CD4-positive, alpha-beta memory T cell (primary cell): ENCODE measurements at regions of chr17 and their contacts with region 1.

Region 1: DNA sequence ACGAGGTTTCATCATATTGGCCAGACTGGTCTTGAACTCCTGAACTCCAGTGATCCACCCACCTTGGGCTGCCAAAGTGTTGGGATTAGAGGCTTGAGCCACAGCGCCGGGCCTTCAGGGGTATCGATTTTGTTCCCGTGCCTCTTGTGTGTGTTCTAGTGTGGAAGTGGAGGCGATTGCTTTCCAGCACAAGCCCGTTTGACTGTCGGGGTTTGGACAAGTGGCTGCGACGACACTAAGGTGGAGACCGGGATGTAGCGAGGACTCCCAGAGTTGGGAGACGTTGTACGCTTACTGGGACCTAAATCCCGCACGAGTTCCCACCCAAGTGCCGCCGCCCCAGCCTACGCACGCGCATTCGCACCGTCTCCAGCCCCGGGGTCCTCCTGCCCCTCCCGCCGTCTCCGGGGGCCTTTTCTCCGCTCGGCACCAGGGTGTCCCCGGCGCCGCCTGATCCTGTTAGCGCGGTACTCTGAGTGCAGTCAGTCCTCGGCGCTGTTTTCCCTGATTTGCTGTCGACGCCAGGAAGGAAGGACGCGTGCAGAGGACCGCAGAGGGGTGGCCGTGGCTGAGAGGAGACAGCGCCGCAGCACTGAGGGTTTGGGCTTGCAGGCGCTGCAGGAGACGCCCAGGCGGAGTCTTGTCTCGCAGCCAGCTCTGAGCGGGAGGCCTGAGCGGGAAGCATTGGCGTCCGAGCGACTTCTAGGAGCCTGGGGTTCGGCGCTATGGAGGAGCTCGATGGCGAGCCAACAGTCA is at the start of gene NUP85:
- DNase-seq: peak; percentile 88 to 95 (median 93)
- H3K4me3 ChIP-seq: peak within 1 kb of the TSS; percentile 55 to 86
- H3K4me3 Mint-ChIP-seq: peak within 1 kb of the TSS; percentile 93 to 99 (median 96)
- H3K27ac ChIP-seq: peak within 1 kb of the TSS; percentile 80
- H3K27ac Mint-ChIP-seq: peak within 1 kb of the TSS; percentile 99 to 100 (median 99)
- H3K4me1 ChIP-seq: peaks cover 26% of the 10 kb centered on the region
- H3K4me1 Mint-ChIP-seq: peaks cover 15 to 48% (median 24%) of the 10 kb centered on the region in 4 donors
- H3K27me3 ChIP-seq: no peaks in the 10 kb centered on the region
- H3K27me3 Mint-ChIP-seq: no peaks in the 10 kb centered on the region
- total RNA-seq, gene NUP85: 137 to 164 TPM

Region 2: GRCh38 chr17:74892974-74893911 is 312.0 kb before region 1 on chr17 and contains the start of gene FADS6:
- CTCF ChIA-PET with region 1: no interaction called
- POLR2A ChIA-PET with region 1: no interaction called
- intact Hi-C with region 1: no loop called
- DNase-seq: peak in 2 of 5 donors; percentile 6 to 10
- H3K4me3 ChIP-seq: peak within 1 kb of the TSS in 1 of 2 donors; percentile 19
- H3K4me3 Mint-ChIP-seq: peak within 1 kb of the TSS; percentile 58 to 84 (median 75)
- H3K27ac ChIP-seq: no peak within 1 kb of the TSS
- H3K27ac Mint-ChIP-seq: peak within 1 kb of the TSS in 1 of 7 donors; percentile 42
- H3K4me1 ChIP-seq: no peaks in the 10 kb centered on the region
- H3K4me1 Mint-ChIP-seq: peaks cover 2 to 5% (median 3%) of the 10 kb centered on the region in 4 donors
- H3K27me3 ChIP-seq: peaks cover 9% of the 10 kb centered on the region
- H3K27me3 Mint-ChIP-seq: peaks cover 29 to 35% of the 10 kb centered on the region in 2 donors
- total RNA-seq, gene FADS6: not detected

Region 3: DNA sequence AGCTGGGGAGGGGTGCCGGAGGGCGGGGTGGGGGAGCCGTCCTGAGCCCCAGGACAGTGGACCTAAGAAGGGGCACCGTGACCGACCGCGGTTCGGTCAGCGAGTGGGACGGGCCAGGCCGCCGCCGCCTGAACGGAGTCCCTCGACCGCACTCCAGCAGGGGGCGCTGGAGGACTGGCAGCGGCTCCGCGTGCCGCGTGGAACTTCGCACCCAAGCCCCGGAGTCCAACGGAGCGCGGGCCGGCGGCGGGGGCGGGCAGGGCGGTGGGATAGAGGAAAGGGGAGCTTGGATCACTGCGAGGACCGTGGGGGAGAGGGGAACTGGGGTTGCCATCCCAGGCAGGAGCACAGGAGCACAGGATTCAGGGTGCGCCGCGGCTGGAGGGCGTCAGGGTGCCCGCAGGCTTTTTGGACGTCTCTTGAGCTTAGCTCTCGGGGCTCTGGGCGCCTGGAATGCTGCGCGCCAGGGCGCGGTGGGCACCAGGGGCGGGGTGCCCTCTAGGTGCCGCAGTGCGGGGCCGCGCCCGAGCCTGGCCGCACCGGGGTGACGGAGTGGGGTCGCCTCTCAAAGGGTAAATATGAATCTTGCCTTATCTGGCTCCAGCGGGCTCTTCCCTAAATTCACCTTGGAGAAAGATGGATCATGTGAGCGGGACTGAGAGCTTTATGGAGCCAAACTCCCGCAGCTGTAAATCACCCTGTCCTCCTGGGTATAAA is 281.5 kb before region 1 on chr17:
- CTCF ChIA-PET with region 1: interaction called, 3 read pairs
- POLR2A ChIA-PET with region 1: no interaction called
- intact Hi-C with region 1: loop called (anchors 1 kb)
- DNase-seq: peak; percentile 57 to 76 (median 68)
- H3K4me3 ChIP-seq: peak overlapping the region in 1 of 2 donors; percentile 14
- H3K4me3 Mint-ChIP-seq: peak overlapping the region in 6 of 8 donors; percentile 13 to 54 (median 44)
- H3K27ac ChIP-seq: no peak overlapping the region
- H3K27ac Mint-ChIP-seq: no peak overlapping the region
- H3K4me1 ChIP-seq: peaks cover 18% of the 10 kb centered on the region
- H3K4me1 Mint-ChIP-seq: peaks cover 1 to 17% (median 11%) of the 10 kb centered on the region in 4 donors
- H3K27me3 ChIP-seq: peaks cover 32% of the 10 kb centered on the region
- H3K27me3 Mint-ChIP-seq: peaks cover 40 to 46% of the 10 kb centered on the region in 2 donors

Region 4: DNA sequence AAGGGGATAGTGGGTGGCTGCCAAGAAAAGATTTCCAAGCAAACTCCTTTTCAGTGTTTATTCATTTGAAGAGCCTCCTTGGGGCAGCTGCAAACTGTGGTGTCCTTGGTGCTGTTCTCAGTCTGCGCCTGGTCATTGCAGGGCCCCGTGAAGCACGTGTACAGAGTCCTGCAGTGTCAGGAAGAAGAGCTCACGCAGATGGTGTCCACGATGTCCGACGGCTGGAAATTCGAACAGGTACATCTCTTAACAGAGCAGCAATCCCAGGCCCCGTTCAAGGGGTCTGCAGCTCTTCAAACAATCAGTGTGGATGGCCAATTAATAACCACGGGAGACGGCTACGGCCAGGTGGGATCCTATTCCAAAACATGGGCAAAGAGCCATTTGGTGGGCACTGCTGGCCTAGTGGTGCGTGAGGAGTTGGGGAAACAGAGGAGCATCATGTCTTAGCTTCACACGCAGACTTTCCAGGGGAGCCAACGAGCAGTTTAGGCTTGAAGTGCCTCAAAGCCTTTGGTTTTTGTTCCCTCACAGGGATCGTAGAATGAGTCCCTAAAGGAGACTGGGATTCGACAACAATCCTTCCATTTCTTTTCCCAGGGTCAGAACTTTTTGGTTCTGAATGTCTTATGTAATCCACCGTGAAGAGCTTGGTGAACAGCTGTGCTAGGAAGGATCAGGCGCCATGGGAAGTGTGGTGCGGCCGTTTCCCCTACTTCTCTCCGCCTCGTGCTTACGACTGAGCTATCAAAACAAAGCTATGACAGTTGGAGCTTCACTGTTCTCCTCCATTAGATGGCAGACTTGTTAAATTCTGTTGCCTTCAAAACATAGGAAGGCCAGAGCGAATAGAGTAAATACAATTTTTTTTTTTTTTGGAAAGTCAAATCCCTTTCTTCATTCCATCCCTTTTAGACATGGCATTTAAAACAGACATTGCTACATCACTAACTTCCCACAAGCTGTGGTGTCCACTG is 145.6 kb before region 1 on chr17:
- CTCF ChIA-PET with region 1: interaction called, 11 read pairs
- POLR2A ChIA-PET with region 1: no interaction called
- intact Hi-C with region 1: no loop called
- DNase-seq: peak in 2 of 5 donors; percentile 20 to 26
- H3K4me3 ChIP-seq: no peak overlapping the region
- H3K4me3 Mint-ChIP-seq: no peak overlapping the region
- H3K27ac ChIP-seq: no peak overlapping the region
- H3K27ac Mint-ChIP-seq: peak overlapping the region in 2 of 7 donors; percentile 61 to 78
- H3K4me1 ChIP-seq: no peaks in the 10 kb centered on the region
- H3K4me1 Mint-ChIP-seq: peaks cover 0 to 18% (median 8%) of the 10 kb centered on the region in 4 donors
- H3K27me3 ChIP-seq: no peaks in the 10 kb centered on the region
- H3K27me3 Mint-ChIP-seq: no peaks in the 10 kb centered on the region

Region 5: DNA sequence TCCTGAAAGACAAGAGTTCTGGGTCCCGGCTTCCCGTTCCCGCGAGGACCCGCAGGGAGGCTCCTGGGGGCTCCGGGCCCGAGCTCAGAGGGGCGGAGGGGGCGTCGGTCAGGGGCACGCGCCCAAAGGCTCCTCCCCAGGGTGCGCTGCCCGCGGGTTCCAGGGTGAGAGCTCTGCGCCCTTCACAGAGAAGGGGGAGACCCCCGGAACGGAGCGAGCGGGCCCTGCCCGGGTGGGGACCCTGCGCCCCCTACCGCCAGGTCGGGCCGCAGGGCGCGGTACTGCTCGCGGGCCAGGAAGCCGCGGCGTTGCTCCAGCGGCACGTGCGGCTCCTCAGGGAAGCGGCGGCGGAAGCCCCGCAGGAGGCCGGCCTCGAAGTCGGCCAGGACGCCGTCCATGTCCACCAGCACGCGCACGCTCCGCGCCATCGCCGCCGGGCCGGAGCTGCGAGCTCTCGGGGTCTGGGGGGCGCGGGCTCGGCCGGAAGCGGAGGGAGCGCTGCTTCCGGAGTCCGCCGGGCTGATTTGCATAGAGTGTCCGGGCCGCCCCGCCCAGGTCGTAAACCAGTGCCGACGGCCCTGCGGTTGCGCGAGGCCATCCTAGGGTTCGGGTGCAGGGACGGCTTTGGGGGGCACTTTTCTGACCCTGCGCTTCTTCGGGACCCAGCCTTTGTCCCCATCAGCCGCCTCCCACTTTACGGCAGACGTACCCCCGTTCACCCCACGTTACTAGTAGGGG is 73.8 kb before region 1 on chr17 and contains the start of gene NT5C:
- CTCF ChIA-PET with region 1: interaction called, 17 read pairs
- POLR2A ChIA-PET with region 1: no interaction called
- intact Hi-C with region 1: loop called (anchors 1 kb)
- DNase-seq: peak in 4 of 5 donors; percentile 38 to 60 (median 49)
- H3K4me3 ChIP-seq: peak within 1 kb of the TSS; percentile 61 to 74
- H3K4me3 Mint-ChIP-seq: peak within 1 kb of the TSS; percentile 87 to 91 (median 90)
- H3K27ac ChIP-seq: peak within 1 kb of the TSS; percentile 80
- H3K27ac Mint-ChIP-seq: peak within 1 kb of the TSS; percentile 81 to 92 (median 88)
- H3K4me1 ChIP-seq: peaks cover 16% of the 10 kb centered on the region
- H3K4me1 Mint-ChIP-seq: peaks cover 8 to 19% (median 11%) of the 10 kb centered on the region in 4 donors
- H3K27me3 ChIP-seq: no peaks in the 10 kb centered on the region
- H3K27me3 Mint-ChIP-seq: no peaks in the 10 kb centered on the region
- total RNA-seq, gene NT5C: 40.1 to 46.6 TPM

Region 6: DNA sequence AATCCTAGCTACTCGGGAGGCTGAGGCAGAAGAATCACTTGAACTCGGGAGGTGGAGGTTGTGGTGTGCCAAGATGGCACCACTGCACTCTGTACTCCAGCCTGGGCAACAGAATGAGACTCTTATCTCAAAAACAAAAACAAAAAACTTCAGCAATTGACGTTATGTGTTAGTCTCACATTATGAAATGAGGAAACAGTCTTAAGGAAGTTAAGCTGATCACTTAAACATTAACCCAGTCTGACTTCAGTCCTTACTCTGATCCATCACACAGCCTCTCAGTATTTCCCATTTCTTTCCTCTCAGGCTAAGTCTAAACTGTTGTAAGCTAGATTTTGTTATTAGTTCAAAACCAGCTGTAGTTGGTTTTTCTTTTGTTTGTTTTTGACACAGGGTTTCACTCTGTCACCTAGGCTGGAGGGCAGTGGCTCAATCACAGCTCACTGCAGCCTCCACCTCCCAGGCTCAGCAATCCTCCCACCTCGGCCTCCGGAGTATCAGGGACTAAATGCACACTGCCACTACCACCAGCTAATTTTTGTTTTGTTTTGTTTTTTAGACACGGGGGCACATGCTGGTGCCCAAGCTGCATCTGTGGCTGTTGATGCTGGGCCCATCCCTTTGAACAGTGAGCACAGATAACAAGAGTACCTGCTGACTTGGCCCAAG is 57.2 kb before region 1 on chr17:
- CTCF ChIA-PET with region 1: no interaction called
- POLR2A ChIA-PET with region 1: no interaction called
- intact Hi-C with region 1: no loop called
- DNase-seq: no peak
- H3K4me3 ChIP-seq: no peak overlapping the region
- H3K4me3 Mint-ChIP-seq: no peak overlapping the region
- H3K27ac ChIP-seq: no peak overlapping the region
- H3K27ac Mint-ChIP-seq: peak overlapping the region in 4 of 7 donors; percentile 56 to 91 (median 69)
- H3K4me1 ChIP-seq: peaks cover 14% of the 10 kb centered on the region
- H3K4me1 Mint-ChIP-seq: peaks cover 18 to 26% (median 20%) of the 10 kb centered on the region in 4 donors
- H3K27me3 ChIP-seq: no peaks in the 10 kb centered on the region
- H3K27me3 Mint-ChIP-seq: no peaks in the 10 kb centered on the region

Region 7: GRCh38 chr17:75173526-75173925 is 31.7 kb before region 1 on chr17:
- CTCF ChIA-PET with region 1: interaction called, 39 read pairs
- POLR2A ChIA-PET with region 1: interaction called, 4 read pairs
- intact Hi-C with region 1: loop called (anchors 1 kb)
- DNase-seq: no peak
- H3K4me3 ChIP-seq: no peak overlapping the region
- H3K4me3 Mint-ChIP-seq: no peak overlapping the region
- H3K27ac ChIP-seq: no peak overlapping the region
- H3K27ac Mint-ChIP-seq: peak overlapping the region in 4 of 7 donors; percentile 29 to 75 (median 38)
- H3K4me1 ChIP-seq: peaks cover 9% of the 10 kb centered on the region
- H3K4me1 Mint-ChIP-seq: peaks cover 7 to 26% (median 11%) of the 10 kb centered on the region in 4 donors
- H3K27me3 ChIP-seq: no peaks in the 10 kb centered on the region
- H3K27me3 Mint-ChIP-seq: no peaks in the 10 kb centered on the region

Region 8: DNA sequence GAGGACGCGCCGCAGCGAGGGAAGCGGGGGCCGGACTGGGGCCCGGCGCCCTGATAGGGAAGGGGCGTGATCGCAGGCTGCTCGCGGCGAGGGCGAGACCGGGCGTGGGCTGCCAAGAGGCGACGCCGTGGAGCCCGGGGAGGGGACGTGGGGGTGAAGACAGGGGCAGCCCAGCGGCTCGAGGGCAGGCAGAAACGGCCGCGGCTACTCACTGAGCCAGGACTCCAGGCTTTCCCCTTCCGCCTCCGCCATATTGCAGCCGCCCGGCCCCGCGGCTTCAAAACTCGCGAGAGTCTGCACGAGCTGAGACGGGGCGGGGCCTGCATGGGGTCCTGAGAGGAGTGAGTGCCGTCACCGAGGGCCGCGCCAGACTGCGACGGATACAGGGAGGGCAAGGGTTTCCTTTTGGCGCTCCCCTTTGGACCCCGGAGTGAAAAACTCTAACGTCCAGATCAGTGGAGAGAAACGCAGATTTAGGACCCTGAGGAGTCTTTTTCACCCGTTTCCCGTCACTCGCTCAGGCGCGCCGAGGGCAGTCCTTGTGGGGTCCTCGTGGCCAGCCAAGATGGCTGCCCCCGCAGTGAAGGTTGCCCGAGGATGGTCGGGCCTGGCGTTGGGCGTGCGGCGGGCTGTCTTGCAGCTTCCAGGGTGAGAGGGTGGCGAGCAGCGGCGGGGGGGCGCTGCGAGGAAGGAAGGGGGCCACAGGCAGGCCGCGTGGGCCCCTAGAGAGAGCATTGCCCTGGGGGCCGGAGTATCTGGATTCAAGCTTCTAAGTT is 56.3 kb after region 1 on chr17 and contains the starts of genes GGA3 and MRPS7:
- CTCF ChIA-PET with region 1: interaction called, 10 read pairs
- POLR2A ChIA-PET with region 1: interaction called, 8 read pairs
- intact Hi-C with region 1: loop called (anchors 1 kb)
- DNase-seq: peak; percentile 95 to 99 (median 97)
- H3K4me3 ChIP-seq: peak within 1 kb of the TSS; percentile 77 to 99
- H3K4me3 Mint-ChIP-seq: peak within 1 kb of the TSS; percentile 93 to 99 (median 97)
- H3K27ac ChIP-seq: peak within 1 kb of the TSS; percentile 96
- H3K27ac Mint-ChIP-seq: peak within 1 kb of the TSS; percentile 100
- H3K4me1 ChIP-seq: peaks cover 35% of the 10 kb centered on the region
- H3K4me1 Mint-ChIP-seq: peaks cover 32 to 65% (median 48%) of the 10 kb centered on the region in 4 donors
- H3K27me3 ChIP-seq: no peaks in the 10 kb centered on the region
- H3K27me3 Mint-ChIP-seq: no peaks in the 10 kb centered on the region
- total RNA-seq, gene GGA3: 121 to 122 TPM
- total RNA-seq, gene MRPS7: 34.1 to 36.3 TPM

Region 9: GRCh38 chr17:75271233-75271954 is 66.2 kb after region 1 on chr17:
- CTCF ChIA-PET with region 1: interaction called, 11 read pairs
- POLR2A ChIA-PET with region 1: interaction called, 11 read pairs
- intact Hi-C with region 1: no loop called
- DNase-seq: peak; percentile 86 to 94 (median 88)
- H3K4me3 ChIP-seq: peak overlapping the region; percentile 42 to 82
- H3K4me3 Mint-ChIP-seq: peak overlapping the region; percentile 80 to 91 (median 84)
- H3K27ac ChIP-seq: peak overlapping the region; percentile 89
- H3K27ac Mint-ChIP-seq: peak overlapping the region; percentile 25 to 94 (median 88)
- H3K4me1 ChIP-seq: peaks cover 27% of the 10 kb centered on the region
- H3K4me1 Mint-ChIP-seq: peaks cover 10 to 35% (median 22%) of the 10 kb centered on the region in 4 donors
- H3K27me3 ChIP-seq: no peaks in the 10 kb centered on the region
- H3K27me3 Mint-ChIP-seq: no peaks in the 10 kb centered on the region

Region 10: GRCh38 chr17:75325827-75326225 is 120.6 kb after region 1 on chr17:
- CTCF ChIA-PET with region 1: no interaction called
- POLR2A ChIA-PET with region 1: no interaction called
- intact Hi-C with region 1: no loop called
- DNase-seq: no peak
- H3K4me3 ChIP-seq: no peak overlapping the region
- H3K4me3 Mint-ChIP-seq: no peak overlapping the region
- H3K27ac ChIP-seq: no peak overlapping the region
- H3K27ac Mint-ChIP-seq: peak overlapping the region; percentile 52 to 84 (median 66)
- H3K4me1 ChIP-seq: peaks cover 31% of the 10 kb centered on the region
- H3K4me1 Mint-ChIP-seq: peaks cover 11 to 18% (median 14%) of the 10 kb centered on the region in 4 donors
- H3K27me3 ChIP-seq: no peaks in the 10 kb centered on the region
- H3K27me3 Mint-ChIP-seq: no peaks in the 10 kb centered on the region